Natural killer cell (primary cell): ENCODE measurements at regions of chr5 and their contacts with region 1.

Region 1: DNA sequence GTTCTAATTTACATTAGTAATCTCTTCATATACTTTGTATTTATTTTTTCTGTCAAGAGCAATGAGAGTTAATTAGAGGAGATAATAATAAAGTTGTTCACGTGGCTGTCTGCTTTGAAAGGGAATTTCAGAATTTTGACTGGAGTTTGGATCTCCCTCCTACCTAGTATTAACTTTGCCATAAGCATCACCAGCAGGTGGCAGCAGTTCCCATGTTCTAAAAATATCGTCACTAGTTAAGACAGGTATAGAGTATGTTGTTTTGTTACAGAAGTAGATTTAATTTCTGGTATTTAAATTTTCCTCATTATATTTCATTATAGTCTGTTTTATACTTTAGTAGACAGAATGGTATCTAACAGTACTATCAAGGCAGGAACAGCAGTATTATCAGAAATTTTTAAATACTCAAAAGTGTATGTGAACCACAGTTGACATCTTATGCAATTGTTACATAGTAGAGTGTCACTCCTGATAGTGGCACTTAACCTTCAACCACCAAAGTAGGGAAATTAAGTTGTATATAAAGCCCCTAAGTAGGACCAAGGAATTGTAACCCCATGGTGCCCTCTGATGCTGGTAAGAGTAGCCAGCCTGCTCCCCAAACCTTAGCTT is 20.4 kb downstream of the GNPDA1 start:
- DNase-seq: peak; percentile 67 to 90
- ATAC-seq: peak; percentile 65 to 77 (median 75)
- H3K4me3 ChIP-seq: no peak overlapping the region
- H3K4me3 Mint-ChIP-seq: no peak overlapping the region
- H3K27ac ChIP-seq: no peak overlapping the region
- H3K27ac Mint-ChIP-seq: no peak overlapping the region
- H3K4me1 ChIP-seq: no peaks in the 10 kb centered on the region
- H3K4me1 Mint-ChIP-seq: peaks cover 5 to 6% of the 10 kb centered on the region in 2 donors
- H3K27me3 ChIP-seq: no peaks in the 10 kb centered on the region
- H3K27me3 Mint-ChIP-seq: no peaks in the 10 kb centered on the region
- CTCF ChIP-seq: peak; percentile 86

Region 2: GRCh38 chr5:141960449-141961202 is 31.8 kb before region 1 on chr5:
- intact Hi-C with region 1: loop called (anchors 1 kb)
- DNase-seq: peak; percentile 86 to 96
- ATAC-seq: peak; percentile 93 to 94 (median 94)
- H3K4me3 ChIP-seq: no peak overlapping the region
- H3K4me3 Mint-ChIP-seq: peak overlapping the region; percentile 78
- H3K27ac ChIP-seq: peak overlapping the region; percentile 55
- H3K27ac Mint-ChIP-seq: peak overlapping the region; percentile 77 to 86
- H3K4me1 ChIP-seq: peaks cover 41% of the 10 kb centered on the region
- H3K4me1 Mint-ChIP-seq: peaks cover 43 to 44% of the 10 kb centered on the region in 2 donors
- H3K27me3 ChIP-seq: no peaks in the 10 kb centered on the region
- H3K27me3 Mint-ChIP-seq: no peaks in the 10 kb centered on the region
- CTCF ChIP-seq: peak; percentile 76

Region 3: GRCh38 chr5:142012792-142013388 is 20.4 kb after region 1 on chr5 and contains the start of gene GNPDA1:
- intact Hi-C with region 1: loop called (anchors 1 kb)
- DNase-seq: peak; percentile 80 to 85
- ATAC-seq: peak; percentile 76 to 94 (median 92)
- H3K4me3 ChIP-seq: peak within 1 kb of the TSS; percentile 78
- H3K4me3 Mint-ChIP-seq: peak within 1 kb of the TSS; percentile 75
- H3K27ac ChIP-seq: peak within 1 kb of the TSS; percentile 63
- H3K27ac Mint-ChIP-seq: peak within 1 kb of the TSS; percentile 61 to 89
- H3K4me1 ChIP-seq: peaks cover 55% of the 10 kb centered on the region
- H3K4me1 Mint-ChIP-seq: peaks cover 35 to 55% of the 10 kb centered on the region in 2 donors
- H3K27me3 ChIP-seq: no peaks in the 10 kb centered on the region
- H3K27me3 Mint-ChIP-seq: no peaks in the 10 kb centered on the region
- CTCF ChIP-seq: no peak
- total RNA-seq, gene GNPDA1: 10.7 to 12.0 (median 11.2) TPM

Region 4: GRCh38 chr5:142128675-142129208 is 136.3 kb after region 1 on chr5:
- intact Hi-C with region 1: loop called (anchors 5 kb)
- DNase-seq: no peak
- ATAC-seq: no peak
- H3K4me3 ChIP-seq: no peak overlapping the region
- H3K4me3 Mint-ChIP-seq: no peak overlapping the region
- H3K27ac ChIP-seq: no peak overlapping the region
- H3K27ac Mint-ChIP-seq: peak overlapping the region in 1 of 2 donors; percentile 69
- H3K4me1 ChIP-seq: no peaks in the 10 kb centered on the region
- H3K4me1 Mint-ChIP-seq: peaks cover 34 to 39% of the 10 kb centered on the region in 2 donors
- H3K27me3 ChIP-seq: no peaks in the 10 kb centered on the region
- H3K27me3 Mint-ChIP-seq: no peaks in the 10 kb centered on the region
- CTCF ChIP-seq: no peak

Region 5: DNA sequence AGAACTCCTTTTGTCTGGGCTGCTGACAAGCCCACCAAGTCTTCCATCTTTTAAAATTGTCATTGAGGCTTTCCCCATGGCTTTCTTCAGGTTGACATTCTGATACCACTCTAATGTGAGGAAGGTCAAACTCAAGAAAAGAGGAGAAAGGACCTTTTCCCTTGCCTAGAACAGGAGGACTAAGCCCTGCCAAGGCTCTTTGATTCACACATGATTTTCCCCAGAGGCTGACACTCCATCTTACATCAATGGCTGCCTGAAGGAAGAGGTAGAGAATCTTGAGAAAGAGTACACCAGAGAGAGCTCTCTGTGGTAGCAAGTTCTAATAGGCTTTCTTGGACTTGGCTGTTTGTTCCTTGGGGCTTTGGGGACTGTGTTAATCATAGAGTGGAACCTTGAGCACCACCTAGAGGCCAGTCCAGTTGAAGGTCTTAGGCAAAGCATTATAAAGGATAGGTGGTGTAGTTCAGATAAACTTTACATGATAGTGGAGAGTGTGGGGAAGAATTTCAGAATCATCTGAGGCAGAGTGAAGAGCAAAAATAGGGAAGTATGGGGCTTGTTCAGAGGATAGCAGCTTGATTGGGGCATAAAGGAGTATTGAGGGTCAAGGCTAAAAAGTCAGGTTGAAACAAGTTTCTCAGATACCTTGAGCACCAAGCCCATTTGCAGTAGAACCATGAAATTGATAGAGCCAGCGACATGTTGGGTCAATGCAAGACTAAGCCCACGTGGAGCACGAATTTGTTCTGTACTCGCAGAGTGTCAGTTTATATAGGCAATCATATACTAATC is 152.8 kb after region 1 on chr5:
- intact Hi-C with region 1: loop called (anchors 1 kb)
- DNase-seq: peak; percentile 21 to 77
- ATAC-seq: peak; percentile 82 to 90 (median 86)
- H3K4me3 ChIP-seq: no peak overlapping the region
- H3K4me3 Mint-ChIP-seq: no peak overlapping the region
- H3K27ac ChIP-seq: no peak overlapping the region
- H3K27ac Mint-ChIP-seq: no peak overlapping the region
- H3K4me1 ChIP-seq: no peaks in the 10 kb centered on the region
- H3K4me1 Mint-ChIP-seq: no peaks in the 10 kb centered on the region
- H3K27me3 ChIP-seq: no peaks in the 10 kb centered on the region
- H3K27me3 Mint-ChIP-seq: no peaks in the 10 kb centered on the region
- CTCF ChIP-seq: peak; percentile 67

Region 6: DNA sequence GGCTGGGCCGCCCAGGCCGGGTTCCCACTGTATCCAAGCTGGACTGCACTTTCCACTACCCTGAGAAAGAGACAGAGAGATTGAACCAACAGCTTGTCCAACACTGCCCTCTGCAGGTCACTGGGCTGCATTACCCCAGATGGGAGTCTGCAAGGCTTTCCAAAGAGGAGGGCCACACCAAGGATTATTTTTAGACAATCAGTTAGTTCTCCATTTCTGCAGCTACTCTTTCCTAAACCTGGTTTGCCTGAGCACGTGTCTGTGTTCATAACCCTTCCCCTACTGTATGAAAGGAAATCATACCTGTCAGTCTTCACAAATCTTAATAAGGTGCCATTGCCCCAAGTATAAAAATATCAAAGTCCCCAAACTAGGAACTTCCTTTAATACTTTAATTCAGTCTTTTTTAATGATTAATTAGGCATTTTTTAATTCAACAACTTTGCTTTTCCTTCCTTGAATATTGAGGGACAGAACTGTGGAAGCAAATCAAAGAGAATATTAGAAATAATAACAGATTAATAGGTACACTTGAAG is 706.8 kb after region 1 on chr5:
- intact Hi-C with region 1: loop called (anchors 5 kb)
- DNase-seq: peak; percentile 64 to 85
- ATAC-seq: peak; percentile 88 to 97 (median 88)
- H3K4me3 ChIP-seq: no peak overlapping the region
- H3K4me3 Mint-ChIP-seq: no peak overlapping the region
- H3K27ac ChIP-seq: no peak overlapping the region
- H3K27ac Mint-ChIP-seq: no peak overlapping the region
- H3K4me1 ChIP-seq: no peaks in the 10 kb centered on the region
- H3K4me1 Mint-ChIP-seq: no peaks in the 10 kb centered on the region
- H3K27me3 ChIP-seq: no peaks in the 10 kb centered on the region
- H3K27me3 Mint-ChIP-seq: peaks cover 0 to 17% of the 10 kb centered on the region in 2 donors
- CTCF ChIP-seq: peak; percentile 90